Adrenal gland (tissue), 19 donors: ENCODE measurements at regions of chr2 and their contacts with region 1.

Region 1: GRCh38 chr2:20242060-20243006 is 17.4 kb upstream of the SDC1 start:
- DNase-seq: no peak
- H3K4me3 ChIP-seq: no peak overlapping the region
- H3K27ac ChIP-seq: no peak overlapping the region
- H3K4me1 ChIP-seq: no peaks in the 10 kb centered on the region
- H3K27me3 ChIP-seq: no peaks in the 10 kb centered on the region
- CTCF ChIP-seq: peak in 2 of 6 experiments; percentile 44 to 47
- POLR2A ChIP-seq: no peak

Region 2: GRCh38 chr2:20172273-20173055 is 69.9 kb before region 1 on chr2:
- intact Hi-C with region 1: no loop called
- DNase-seq: peak in 1 of 7 donors; percentile 5
- H3K4me3 ChIP-seq: no peak overlapping the region
- H3K27ac ChIP-seq: no peak overlapping the region
- H3K4me1 ChIP-seq: no peaks in the 10 kb centered on the region
- H3K27me3 ChIP-seq: no peaks in the 10 kb centered on the region
- CTCF ChIP-seq: no peak
- POLR2A ChIP-seq: no peak

Region 3: DNA sequence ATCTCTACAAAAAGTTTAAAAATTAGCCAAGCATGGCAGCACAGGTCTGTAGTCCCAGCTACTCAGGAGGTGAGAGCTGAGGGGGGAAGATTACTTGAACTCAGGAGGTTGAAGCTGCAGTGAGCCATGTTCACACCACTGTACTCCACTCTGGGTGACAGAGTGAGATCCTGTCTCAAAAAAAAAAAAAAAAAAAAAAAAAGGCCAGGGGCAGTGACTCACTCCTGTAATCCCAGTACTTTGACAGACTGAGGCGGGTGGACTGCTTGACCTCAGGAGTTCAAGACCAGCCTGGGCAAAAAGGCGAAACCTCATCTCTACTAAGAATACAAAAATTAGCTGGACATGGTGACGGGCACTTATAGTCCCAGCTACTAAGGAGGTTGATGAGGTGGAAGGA is 71.3 kb after region 1 on chr2:
- intact Hi-C with region 1: loop called in 1 of 2 experiments (anchors 10 kb)
- DNase-seq: peak in 1 of 7 donors; percentile 25
- H3K4me3 ChIP-seq: no peak overlapping the region
- H3K27ac ChIP-seq: no peak overlapping the region
- H3K4me1 ChIP-seq: no peaks in the 10 kb centered on the region
- H3K27me3 ChIP-seq: no peaks in the 10 kb centered on the region
- CTCF ChIP-seq: no peak
- POLR2A ChIP-seq: no peak